Activated CD8-positive, alpha-beta T cell treated with anti-CD3 and anti-CD28 coated beads for 36 hours (primary cell): ENCODE measurements at regions of chr20 and their contacts with region 1.

Region 1: DNA sequence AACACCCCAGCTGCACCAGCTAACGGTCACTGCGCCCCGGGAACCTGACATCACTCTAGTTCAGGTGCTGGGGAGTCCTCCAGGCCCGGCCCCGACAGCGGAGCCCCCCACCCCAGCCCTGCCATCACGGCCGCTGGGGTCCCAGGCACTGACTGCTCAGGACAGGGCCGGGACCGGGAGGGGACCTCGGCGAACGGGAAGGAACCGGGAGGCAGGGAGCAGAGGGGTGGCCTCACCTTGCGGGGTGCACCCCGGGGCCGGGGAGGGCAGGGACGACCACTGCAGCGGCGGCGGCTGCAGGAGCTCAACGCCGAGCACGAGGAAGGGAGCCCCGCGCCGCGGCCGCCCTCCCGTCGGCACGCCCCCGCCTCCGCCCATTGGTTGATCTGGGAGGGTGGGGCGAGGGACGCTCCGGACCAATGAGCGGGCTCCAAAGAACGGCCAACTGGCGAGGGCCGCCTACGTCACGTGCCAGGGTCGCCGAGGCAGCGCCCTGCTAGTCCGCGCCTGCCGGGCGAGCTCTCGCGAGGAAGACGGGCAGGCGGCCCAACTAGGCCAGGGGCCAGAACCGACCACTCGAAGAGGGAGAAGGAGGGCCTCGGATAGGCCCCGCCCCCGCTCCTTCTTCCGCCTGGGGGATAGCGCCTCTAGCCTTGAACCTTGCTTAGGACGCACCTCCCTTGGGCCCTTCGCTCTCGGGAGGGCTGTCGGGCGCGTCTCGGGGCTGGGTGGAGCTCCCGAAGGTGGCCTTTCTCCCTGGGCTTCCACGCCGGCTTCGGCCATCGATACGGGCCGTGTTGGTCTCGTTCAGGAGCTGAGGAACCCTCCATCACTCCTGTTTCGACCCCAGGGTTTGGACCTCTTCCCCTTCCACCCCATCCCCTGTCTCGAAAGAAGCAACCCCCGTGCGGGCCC is at the start of gene ADISSP:
- DNase-seq: peak; percentile 99
- ATAC-seq: peak; percentile 91
- H3K4me3 Mint-ChIP-seq: peak within 1 kb of the TSS; percentile 87
- H3K27ac Mint-ChIP-seq: peak within 1 kb of the TSS; percentile 95
- H3K4me1 Mint-ChIP-seq: peaks cover 26% of the 10 kb centered on the region
- H3K27me3 Mint-ChIP-seq: no peaks in the 10 kb centered on the region
- CTCF ChIP-seq: no peak
- total RNA-seq, gene ADISSP: 62.5 to 66.6 TPM

Region 2: GRCh38 chr20:3557237-3557785 is 210.4 kb before region 1 on chr20:
- CTCF ChIA-PET with region 1: no interaction called
- POLR2A ChIA-PET with region 1: no interaction called
- intact Hi-C with region 1: no loop called
- DNase-seq: no peak
- ATAC-seq: no peak
- H3K4me3 Mint-ChIP-seq: no peak overlapping the region
- H3K27ac Mint-ChIP-seq: no peak overlapping the region
- H3K4me1 Mint-ChIP-seq: no peaks in the 10 kb centered on the region
- H3K27me3 Mint-ChIP-seq: no peaks in the 10 kb centered on the region
- CTCF ChIP-seq: no peak

Region 3: DNA sequence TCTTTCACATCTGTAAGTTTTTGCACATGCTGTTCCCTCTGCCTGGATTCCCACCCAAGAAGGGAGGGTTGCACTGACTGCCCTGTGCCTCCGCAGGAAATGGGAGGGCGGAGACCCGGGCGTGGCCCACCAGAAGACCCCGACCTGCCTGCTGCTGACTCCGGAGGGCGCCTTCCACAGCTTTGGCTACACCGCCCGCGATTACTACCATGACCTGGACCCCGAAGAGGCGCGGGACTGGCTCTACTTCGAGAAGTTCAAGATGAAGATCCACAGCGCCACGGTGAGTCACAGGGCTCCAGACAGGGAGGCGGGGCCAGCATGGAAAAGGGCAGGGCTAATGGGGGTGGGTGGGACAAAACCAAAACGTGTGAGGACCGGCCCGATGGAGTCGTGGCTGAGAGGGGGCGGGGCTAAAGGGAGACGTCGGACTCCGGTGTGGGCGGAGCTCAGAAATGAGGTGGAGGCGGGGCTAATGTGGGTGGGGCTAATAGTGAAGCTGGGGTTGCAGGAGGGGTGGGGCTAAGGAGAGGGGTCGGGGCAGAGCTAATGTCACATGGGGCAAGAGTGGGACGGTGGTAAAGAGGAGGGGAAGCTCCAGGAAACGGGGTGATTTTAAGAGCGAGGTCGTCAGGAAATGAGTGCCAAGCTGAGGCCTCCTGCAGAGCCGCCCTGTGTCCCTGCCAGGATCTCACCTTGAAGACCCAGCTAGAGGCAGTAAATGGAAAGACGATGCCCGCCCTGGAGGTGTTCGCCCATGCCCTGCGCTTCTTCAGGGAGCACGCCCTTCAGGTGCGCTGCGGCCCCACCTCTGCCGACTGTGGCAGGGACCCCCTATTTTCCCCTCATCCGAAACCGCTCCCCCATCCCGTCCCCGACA is 22.6 kb before region 1 on chr20:
- CTCF ChIA-PET with region 1: interaction called, 10 read pairs
- POLR2A ChIA-PET with region 1: interaction called, 6 read pairs
- intact Hi-C with region 1: no loop called
- DNase-seq: peak; percentile 86
- ATAC-seq: peak; percentile 91
- H3K4me3 Mint-ChIP-seq: peak overlapping the region; percentile 53
- H3K27ac Mint-ChIP-seq: no peak overlapping the region
- H3K4me1 Mint-ChIP-seq: peaks cover 7% of the 10 kb centered on the region
- H3K27me3 Mint-ChIP-seq: peaks cover 4% of the 10 kb centered on the region
- CTCF ChIP-seq: no peak

Region 4: GRCh38 chr20:3753098-3753980 is 14.3 kb before region 1 on chr20:
- CTCF ChIA-PET with region 1: interaction called, 24 read pairs
- POLR2A ChIA-PET with region 1: interaction called, 10 read pairs
- intact Hi-C with region 1: no loop called
- DNase-seq: peak; percentile 83
- ATAC-seq: peak; percentile 72
- H3K4me3 Mint-ChIP-seq: no peak overlapping the region
- H3K27ac Mint-ChIP-seq: no peak overlapping the region
- H3K4me1 Mint-ChIP-seq: peaks cover 8% of the 10 kb centered on the region
- H3K27me3 Mint-ChIP-seq: no peaks in the 10 kb centered on the region
- CTCF ChIP-seq: peak; percentile 60

Region 5: GRCh38 chr20:3781153-3781910 is 13.6 kb after region 1 on chr20 and contains the start of gene SPEF1:
- CTCF ChIA-PET with region 1: interaction called, 30 read pairs
- POLR2A ChIA-PET with region 1: interaction called, 32 read pairs
- intact Hi-C with region 1: no loop called
- DNase-seq: peak; percentile 64
- ATAC-seq: peak; percentile 63
- H3K4me3 Mint-ChIP-seq: peak within 1 kb of the TSS; percentile 43
- H3K27ac Mint-ChIP-seq: no peak within 1 kb of the TSS
- H3K4me1 Mint-ChIP-seq: peaks cover 42% of the 10 kb centered on the region
- H3K27me3 Mint-ChIP-seq: peaks cover 14% of the 10 kb centered on the region
- CTCF ChIP-seq: no peak
- total RNA-seq, gene SPEF1: 0.23 TPM in 1 of 2 experiments, not detected in the other

Region 6: DNA sequence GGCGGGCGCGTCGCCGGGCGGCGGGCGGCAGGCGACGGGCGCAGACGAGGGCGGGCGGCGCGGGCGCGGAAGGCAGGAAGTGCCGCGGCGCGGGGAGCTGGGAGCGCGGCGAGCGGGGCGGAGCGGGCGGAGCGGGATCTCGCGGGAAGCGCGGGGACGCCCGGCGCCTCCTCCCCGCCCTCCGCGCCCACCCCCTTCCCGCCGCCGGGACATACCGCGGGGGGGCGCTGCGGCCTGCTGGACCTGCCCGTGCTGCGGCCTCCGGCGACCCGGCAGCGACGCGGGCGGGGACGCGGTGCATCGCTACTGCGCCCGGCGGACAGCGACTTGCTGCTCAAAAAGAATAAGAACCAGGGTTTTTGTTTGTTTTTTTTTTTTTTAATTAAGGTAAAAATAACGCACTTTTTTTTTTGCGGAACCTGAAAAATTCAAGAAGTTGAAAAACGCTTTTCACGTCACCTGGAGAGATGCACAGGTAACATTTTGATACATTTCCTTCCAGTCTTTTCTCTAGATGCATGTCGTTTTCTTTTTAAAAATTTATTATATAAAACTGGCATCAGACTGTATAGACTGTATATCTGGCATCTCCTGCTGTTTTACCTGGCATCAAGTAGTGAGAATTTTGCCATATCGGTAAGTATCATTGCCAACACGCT is 19.1 kb after region 1 on chr20 and contains the start of gene CENPB:
- CTCF ChIA-PET with region 1: interaction called, 30 read pairs
- POLR2A ChIA-PET with region 1: interaction called, 18 read pairs
- intact Hi-C with region 1: no loop called
- DNase-seq: peak; percentile 89
- ATAC-seq: peak; percentile 92
- H3K4me3 Mint-ChIP-seq: peak within 1 kb of the TSS; percentile 80
- H3K27ac Mint-ChIP-seq: peak within 1 kb of the TSS; percentile 85
- H3K4me1 Mint-ChIP-seq: peaks cover 37% of the 10 kb centered on the region
- H3K27me3 Mint-ChIP-seq: no peaks in the 10 kb centered on the region
- CTCF ChIP-seq: peak; percentile 95
- total RNA-seq, gene CENPB: 35.0 to 35.4 TPM

Region 7: GRCh38 chr20:3820048-3820900 is 52.6 kb after region 1 on chr20 and contains the start of gene AP5S1:
- CTCF ChIA-PET with region 1: interaction called, 28 read pairs
- POLR2A ChIA-PET with region 1: interaction called, 3 read pairs
- intact Hi-C with region 1: no loop called
- DNase-seq: peak; percentile 97
- ATAC-seq: peak; percentile 79
- H3K4me3 Mint-ChIP-seq: peak within 1 kb of the TSS; percentile 92
- H3K27ac Mint-ChIP-seq: peak within 1 kb of the TSS; percentile 97
- H3K4me1 Mint-ChIP-seq: peaks cover 33% of the 10 kb centered on the region
- H3K27me3 Mint-ChIP-seq: no peaks in the 10 kb centered on the region
- CTCF ChIP-seq: peak; percentile 88
- total RNA-seq, gene AP5S1: 7.4 to 8.6 TPM

Region 8: DNA sequence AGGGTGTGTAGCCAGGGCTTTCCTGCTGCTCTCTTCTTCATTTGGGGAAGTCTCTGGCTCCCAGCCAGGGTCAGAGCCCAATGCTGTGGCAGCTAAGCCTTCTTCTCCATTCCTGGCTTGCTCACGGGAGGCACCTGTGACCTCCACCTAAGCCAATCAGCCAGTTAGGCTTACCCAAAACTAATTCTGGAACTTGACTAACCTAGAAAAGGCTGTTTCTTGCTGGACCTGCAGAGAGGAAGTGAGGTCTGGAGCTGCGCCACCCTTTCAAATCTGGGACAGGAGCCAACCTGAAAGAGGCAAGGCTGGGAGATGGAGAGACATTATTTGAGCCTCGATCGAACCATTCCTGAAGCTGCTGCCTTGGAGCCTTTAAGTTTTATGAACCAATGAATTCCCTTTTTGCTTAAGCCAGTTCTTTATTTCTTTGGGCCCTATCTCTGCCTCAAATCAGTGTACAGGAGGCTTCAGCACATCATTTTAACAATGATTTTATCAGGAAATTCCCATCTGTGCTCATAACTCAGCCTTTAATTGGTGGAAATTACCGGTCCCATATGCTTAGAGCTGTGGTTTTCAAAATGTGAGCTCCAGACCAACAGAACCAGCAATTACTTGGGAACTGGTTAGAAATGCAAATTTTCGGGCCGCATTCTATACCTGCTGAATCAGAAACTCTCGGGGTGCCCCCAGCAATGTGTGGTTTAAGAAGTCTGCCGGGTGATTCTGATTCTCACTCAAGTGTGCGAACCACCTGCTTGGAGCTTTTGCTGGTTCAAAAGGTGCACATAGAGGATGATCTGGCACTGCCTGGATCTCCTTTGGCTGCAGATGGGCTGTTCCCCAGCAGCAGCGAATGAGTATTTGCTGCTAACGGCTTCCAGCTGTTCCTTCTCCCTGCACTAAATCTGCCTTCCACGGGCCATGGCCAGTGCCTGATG is 345.1 kb after region 1 on chr20:
- CTCF ChIA-PET with region 1: no interaction called
- POLR2A ChIA-PET with region 1: no interaction called
- intact Hi-C with region 1: no loop called
- DNase-seq: peak; percentile 57
- ATAC-seq: peak; percentile 8
- H3K4me3 Mint-ChIP-seq: no peak overlapping the region
- H3K27ac Mint-ChIP-seq: no peak overlapping the region
- H3K4me1 Mint-ChIP-seq: peaks cover 30% of the 10 kb centered on the region
- H3K27me3 Mint-ChIP-seq: peaks cover 9% of the 10 kb centered on the region
- CTCF ChIP-seq: no peak